Dorsolateral prefrontal cortex (tissue), 120 donors: ENCODE measurements at regions of chr13 and their contacts with region 1.

Region 1: GRCh38 chr13:99980201-99980823 is 1.3 kb upstream of the ZIC2 start:
- DNase-seq: peak in 3 of 10 donors; percentile 36 to 91 (median 75)
- H3K4me3 ChIP-seq: peak overlapping the region; percentile 42 to 77 (median 64)
- H3K27ac ChIP-seq: peak overlapping the region in 58 of 59 donors; percentile 49 to 98 (median 88)
- H3K27me3 ChIP-seq: peaks cover 0 to 100% (median 83%) of the 10 kb centered on the region in 45 donors
- CTCF ChIP-seq: peak in 1 of 56 donors; percentile 12

Region 2: GRCh38 chr13:100088644-100089464 is 108.5 kb after region 1 on chr13 and contains the start of gene PCCA:
- intact Hi-C with region 1: loop called in 1 of 2 experiments (anchors 5 kb)
- DNase-seq: peak; percentile 90 to 97 (median 95)
- H3K4me3 ChIP-seq: peak within 1 kb of the TSS; percentile 67 to 100 (median 94)
- H3K27ac ChIP-seq: peak within 1 kb of the TSS in 55 of 59 donors; percentile 1 to 93 (median 78)
- H3K27me3 ChIP-seq: no peaks in the 10 kb centered on the region
- CTCF ChIP-seq: peak in 32 of 56 donors; percentile 4 to 52 (median 24)
- total RNA-seq, gene PCCA: 48.8 to 105 (median 68.6) TPM